Pancreas (tissue), 10 donors: ENCODE measurements at regions of chr18 and their contacts with region 1.

Region 1: GRCh38 chr18:32261003-32261402 is 71.2 kb downstream of the MEP1B start:
- DNase-seq: no peak
- ATAC-seq: peak in 1 of 4 donors; percentile 39
- H3K4me3 ChIP-seq: no peak overlapping the region
- H3K27ac ChIP-seq: no peak overlapping the region
- H3K4me1 ChIP-seq: no peaks in the 10 kb centered on the region
- H3K27me3 ChIP-seq: no peaks in the 10 kb centered on the region
- CTCF ChIP-seq: no peak

Region 2: GRCh38 chr18:32152705-32153448 is 108.1 kb before region 1 on chr18:
- intact Hi-C with region 1: no loop called
- DNase-seq: no peak
- ATAC-seq: no peak
- H3K4me3 ChIP-seq: no peak overlapping the region
- H3K27ac ChIP-seq: no peak overlapping the region
- H3K4me1 ChIP-seq: no peaks in the 10 kb centered on the region
- H3K27me3 ChIP-seq: no peaks in the 10 kb centered on the region
- CTCF ChIP-seq: no peak

Region 3: GRCh38 chr18:32189790-32190189 is 71.2 kb before region 1 on chr18 and contains the start of gene MEP1B:
- intact Hi-C with region 1: loop called in 1 of 3 experiments (anchors 10 kb)
- DNase-seq: no peak
- ATAC-seq: no peak
- H3K4me3 ChIP-seq: no peak within 1 kb of the TSS
- H3K27ac ChIP-seq: no peak within 1 kb of the TSS
- H3K4me1 ChIP-seq: no peaks in the 10 kb centered on the region
- H3K27me3 ChIP-seq: no peaks in the 10 kb centered on the region
- CTCF ChIP-seq: no peak
- total RNA-seq, gene MEP1B: 0.18 TPM in 1 of 6 donors, not detected in the others

Region 4: DNA sequence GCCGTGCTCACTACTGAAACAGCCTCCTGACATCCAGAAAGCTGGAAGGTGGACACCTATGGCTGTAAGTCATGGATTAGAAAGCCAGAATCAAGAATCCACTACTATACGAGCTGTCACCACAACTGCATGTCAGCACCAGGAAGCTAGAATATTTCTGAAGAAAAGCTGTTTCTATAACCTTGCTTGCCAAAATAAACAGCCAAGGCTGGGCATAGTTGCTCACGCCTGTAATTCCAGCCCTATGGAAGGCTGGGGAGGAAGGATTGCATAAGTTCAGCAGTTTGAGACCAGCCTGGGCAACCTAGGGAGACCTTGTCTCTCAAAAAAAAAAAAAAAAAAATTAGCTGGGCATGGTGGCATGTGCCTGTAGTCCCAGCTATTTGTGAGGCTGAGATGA is 306.0 kb after region 1 on chr18:
- intact Hi-C with region 1: no loop called
- DNase-seq: no peak
- ATAC-seq: no peak
- H3K4me3 ChIP-seq: no peak overlapping the region
- H3K27ac ChIP-seq: no peak overlapping the region
- H3K4me1 ChIP-seq: no peaks in the 10 kb centered on the region
- H3K27me3 ChIP-seq: no peaks in the 10 kb centered on the region
- CTCF ChIP-seq: no peak